ENCODE measurements at regions of chr1 and their contacts with region 1.

Region 1: DNA sequence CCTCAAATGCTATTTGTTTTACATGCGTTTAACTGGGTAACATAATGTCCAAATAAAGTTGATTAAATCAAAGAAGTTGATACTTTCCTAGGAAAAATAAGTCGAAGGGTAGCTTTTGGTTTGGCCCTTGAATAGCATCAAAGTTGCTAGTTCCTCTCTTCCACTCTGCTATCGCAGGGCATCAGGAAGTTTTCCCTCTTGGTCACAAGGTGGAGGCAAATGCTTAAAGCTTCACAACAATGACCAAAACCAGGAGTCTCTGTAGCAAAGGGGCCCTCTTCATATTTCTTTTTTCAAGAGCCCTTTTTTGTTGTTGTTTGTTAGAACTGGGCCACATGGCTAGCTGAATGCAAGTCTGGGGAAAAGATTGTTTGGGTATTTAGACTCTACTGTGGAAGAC is 668.4 kb downstream of the KCNT2 start:
- DNase-seq: peak; percentile 34
- H3K27ac ChIP-seq: no peak overlapping the region
- CTCF ChIP-seq: no peak

Region 2: DNA sequence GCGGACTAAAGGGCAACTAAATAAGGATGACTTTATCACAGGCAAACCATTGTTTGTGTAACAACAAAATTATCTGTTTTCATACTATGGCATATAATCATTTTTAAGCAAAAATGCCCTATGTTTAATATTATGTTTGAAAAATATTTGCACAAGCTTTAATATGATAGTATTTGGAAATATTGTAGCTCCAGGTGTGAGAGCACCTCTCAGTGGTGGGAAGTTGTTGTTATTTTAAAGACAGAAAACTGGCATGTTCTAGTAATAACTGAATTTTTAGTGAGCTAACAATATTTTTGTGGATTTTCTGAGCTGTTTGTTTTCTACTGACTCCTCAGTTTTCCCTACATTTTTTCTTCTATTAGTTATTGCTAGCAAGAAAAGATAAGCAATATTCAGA is 89.6 kb after region 1 on chr1:
- CTCF ChIA-PET with region 1: interaction called, 65 read pairs
- POLR2A ChIA-PET with region 1: no interaction called
- DNase-seq: no peak
- H3K27ac ChIP-seq: no peak overlapping the region
- CTCF ChIP-seq: no peak

Region 3: DNA sequence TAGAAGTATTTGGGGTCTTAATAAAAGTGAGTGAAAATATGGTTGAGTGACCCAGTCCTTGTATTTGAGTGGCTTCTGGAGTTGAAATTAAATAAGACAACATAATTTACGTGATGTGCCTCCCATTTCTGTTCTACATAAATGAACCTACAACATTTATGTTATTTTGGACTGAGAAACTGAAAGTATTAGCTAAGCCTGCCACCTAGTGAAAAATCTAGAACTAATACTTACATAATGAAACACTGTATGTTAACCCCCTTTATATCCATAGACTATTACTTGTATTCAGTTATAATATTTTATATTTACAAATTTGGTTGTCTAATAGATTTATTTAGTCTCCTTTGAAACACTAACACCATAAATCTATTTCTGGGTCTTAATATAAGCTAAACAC is 369.5 kb after region 1 on chr1:
- CTCF ChIA-PET with region 1: interaction called, 10 read pairs
- POLR2A ChIA-PET with region 1: no interaction called
- DNase-seq: peak; percentile 38
- H3K27ac ChIP-seq: no peak overlapping the region
- CTCF ChIP-seq: peak; percentile 27; the same call in 1 of the 2 replicates